Activated B cell treated with CpG ODN at 0.5 μM for 24 hours (primary cell): ENCODE measurements at regions of chr1 and their contacts with region 1.

Region 1: GRCh38 chr1:9455487-9456234 is 83.6 kb upstream of the SLC25A33 start:
- DNase-seq: peak; percentile 57
- ATAC-seq: peak; percentile 79
- H3K4me3 Mint-ChIP-seq: no peak overlapping the region
- H3K27ac Mint-ChIP-seq: no peak overlapping the region
- H3K4me1 Mint-ChIP-seq: peaks cover 2% of the 10 kb centered on the region
- H3K27me3 Mint-ChIP-seq: peaks cover 3% of the 10 kb centered on the region
- CTCF ChIP-seq: no peak

Region 2: DNA sequence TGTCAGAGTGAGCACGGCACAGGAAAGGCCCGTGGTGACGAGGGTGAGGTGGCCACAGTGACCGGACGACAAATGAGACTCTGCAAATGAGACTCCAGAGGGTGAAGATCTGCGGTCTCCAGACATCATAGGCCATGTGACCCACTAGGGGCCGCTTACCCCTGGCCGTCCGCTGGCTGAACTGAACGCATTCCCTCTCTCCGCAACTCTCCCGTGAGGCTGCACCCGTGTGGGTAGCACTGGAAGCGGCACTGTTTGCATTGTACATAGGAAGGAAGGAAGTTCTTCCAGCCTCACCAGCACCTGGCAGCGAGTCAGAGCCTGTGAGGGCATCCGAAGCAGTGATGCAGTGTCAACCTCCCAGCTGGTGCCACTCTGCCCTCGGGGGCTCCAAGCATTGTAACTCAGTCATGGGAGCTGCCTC is 186.6 kb before region 1 on chr1:
- CTCF ChIA-PET with region 1: interaction called, 20 read pairs
- POLR2A ChIA-PET with region 1: interaction called, 7 read pairs
- intact Hi-C with region 1: loop called (anchors 5 kb)
- DNase-seq: no peak
- ATAC-seq: no peak
- H3K4me3 Mint-ChIP-seq: no peak overlapping the region
- H3K27ac Mint-ChIP-seq: no peak overlapping the region
- H3K4me1 Mint-ChIP-seq: no peaks in the 10 kb centered on the region
- H3K27me3 Mint-ChIP-seq: no peaks in the 10 kb centered on the region
- CTCF ChIP-seq: no peak

Region 3: GRCh38 chr1:9510130-9510529 is 54.5 kb after region 1 on chr1:
- CTCF ChIA-PET with region 1: no interaction called
- POLR2A ChIA-PET with region 1: no interaction called
- intact Hi-C with region 1: no loop called
- DNase-seq: no peak
- ATAC-seq: no peak
- H3K4me3 Mint-ChIP-seq: no peak overlapping the region
- H3K27ac Mint-ChIP-seq: no peak overlapping the region
- H3K4me1 Mint-ChIP-seq: no peaks in the 10 kb centered on the region
- H3K27me3 Mint-ChIP-seq: no peaks in the 10 kb centered on the region
- CTCF ChIP-seq: no peak